GM13976 (cell line): ENCODE measurements at regions of chr11 and their contacts with region 1.

Region 1: GRCh38 chr11:35794850-35795249 is 132.3 kb downstream of the TRIM44 start:
- DNase-seq: no peak
- CTCF ChIP-seq: no peak

Region 2: DNA sequence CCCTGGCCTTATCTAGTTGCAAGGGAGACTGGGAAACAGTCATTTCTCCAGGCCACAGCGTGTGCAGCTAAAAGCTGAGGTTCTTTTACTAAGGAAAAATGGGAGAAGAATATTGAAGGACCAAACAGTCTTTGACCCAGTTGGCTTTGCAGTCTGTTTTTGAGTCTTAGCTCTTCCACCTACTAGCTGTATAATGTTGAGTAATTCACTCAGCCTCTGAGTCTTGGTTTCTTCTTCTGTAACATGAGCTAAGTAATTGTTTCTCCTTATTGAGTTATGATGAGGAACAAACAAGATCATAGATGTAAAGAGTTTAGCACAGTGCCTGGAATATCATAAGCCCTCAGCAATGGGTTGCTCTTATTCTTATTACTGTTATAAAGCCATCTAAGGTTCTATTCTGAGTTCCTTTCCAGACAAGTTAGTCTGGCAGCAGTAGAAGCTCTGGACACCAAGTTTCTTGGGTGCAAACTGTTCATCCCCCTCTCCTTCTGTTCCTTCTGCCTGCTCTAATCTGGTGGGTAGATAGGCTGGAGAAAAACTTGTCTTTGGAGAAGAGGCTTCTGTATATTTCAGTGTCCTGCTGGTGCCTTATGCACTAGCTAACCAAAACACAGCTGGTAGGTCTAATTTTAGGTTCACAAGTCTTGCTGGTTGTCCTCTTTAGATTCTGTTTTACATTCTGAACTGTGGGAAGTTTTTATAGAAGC is 118.8 kb before region 1 on chr11:
- in situ Hi-C with region 1: loop called (anchors 10 kb)
- DNase-seq: no peak
- CTCF ChIP-seq: no peak